Caco-2 (cell line): ENCODE measurements at regions of chr2 and their contacts with region 1.

Region 1: GRCh38 chr2:7363906-7364305 is 446.7 kb downstream of the RNF144A start:
- DNase-seq: peak in 1 of 2 experiments; percentile 19
- H3K4me3 ChIP-seq: no peak overlapping the region
- H3K4me3 Mint-ChIP-seq: no peak overlapping the region
- H3K27ac Mint-ChIP-seq: no peak overlapping the region
- H3K4me1 ChIP-seq: no peaks in the 10 kb centered on the region
- H3K4me1 Mint-ChIP-seq: no peaks in the 10 kb centered on the region
- H3K27me3 ChIP-seq: no peaks in the 10 kb centered on the region
- H3K27me3 Mint-ChIP-seq: no peaks in the 10 kb centered on the region
- CTCF ChIP-seq: peak; percentile 48 to 52

Region 2: DNA sequence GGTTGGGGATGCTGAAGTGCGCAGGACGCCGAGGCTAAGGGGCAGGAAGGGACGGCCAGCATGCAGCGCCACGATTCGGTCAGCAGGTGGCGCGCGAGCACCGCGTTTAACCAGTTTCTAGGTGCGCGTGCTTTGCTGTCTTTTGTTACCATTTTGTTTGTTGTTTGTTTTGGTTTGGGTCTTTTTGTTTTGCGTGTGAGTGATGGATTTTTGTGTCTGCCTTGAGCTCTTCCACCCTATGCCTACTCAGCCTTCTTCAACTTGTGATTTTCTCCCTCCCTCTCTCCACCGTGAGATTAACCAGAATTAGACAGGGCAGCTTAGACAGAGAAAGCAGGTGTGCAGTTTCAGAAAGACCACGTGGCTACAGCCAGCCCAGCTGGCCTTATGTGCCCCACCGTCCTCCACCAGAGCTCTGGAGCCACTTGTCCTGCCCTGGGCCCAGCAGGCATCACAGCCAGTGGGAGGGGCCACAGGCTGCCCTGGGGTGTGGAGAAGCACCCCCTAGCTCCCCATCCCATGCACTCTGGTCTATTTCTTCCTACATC is 266.5 kb before region 1 on chr2:
- CTCF ChIA-PET with region 1: no interaction called
- POLR2A ChIA-PET with region 1: no interaction called
- intact Hi-C with region 1: loop called (anchors 1 kb)
- DNase-seq: peak in 1 of 2 experiments; percentile 77
- H3K4me3 ChIP-seq: no peak overlapping the region
- H3K4me3 Mint-ChIP-seq: peak overlapping the region; percentile 27
- H3K27ac Mint-ChIP-seq: no peak overlapping the region
- H3K4me1 ChIP-seq: no peaks in the 10 kb centered on the region
- H3K4me1 Mint-ChIP-seq: peaks cover under 1% of the 10 kb centered on the region
- H3K27me3 ChIP-seq: no peaks in the 10 kb centered on the region
- H3K27me3 Mint-ChIP-seq: peaks cover 12% of the 10 kb centered on the region
- CTCF ChIP-seq: peak; percentile 93 to 96

Region 3: GRCh38 chr2:7118606-7119503 is 245.1 kb before region 1 on chr2:
- CTCF ChIA-PET with region 1: no interaction called
- POLR2A ChIA-PET with region 1: no interaction called
- intact Hi-C with region 1: loop called (anchors 2 kb)
- DNase-seq: peak in 1 of 2 experiments; percentile 38
- H3K4me3 ChIP-seq: no peak overlapping the region
- H3K4me3 Mint-ChIP-seq: no peak overlapping the region
- H3K27ac Mint-ChIP-seq: no peak overlapping the region
- H3K4me1 ChIP-seq: no peaks in the 10 kb centered on the region
- H3K4me1 Mint-ChIP-seq: no peaks in the 10 kb centered on the region
- H3K27me3 ChIP-seq: peaks cover 2% of the 10 kb centered on the region; the same call in 1 of the 2 replicates
- H3K27me3 Mint-ChIP-seq: peaks cover 18% of the 10 kb centered on the region
- CTCF ChIP-seq: peak; percentile 46 to 55

Region 4: GRCh38 chr2:7392076-7392787 is 28.3 kb after region 1 on chr2:
- CTCF ChIA-PET with region 1: no interaction called
- POLR2A ChIA-PET with region 1: no interaction called
- intact Hi-C with region 1: no loop called
- DNase-seq: no peak
- H3K4me3 ChIP-seq: no peak overlapping the region
- H3K4me3 Mint-ChIP-seq: no peak overlapping the region
- H3K27ac Mint-ChIP-seq: no peak overlapping the region
- H3K4me1 ChIP-seq: no peaks in the 10 kb centered on the region
- H3K4me1 Mint-ChIP-seq: no peaks in the 10 kb centered on the region
- H3K27me3 ChIP-seq: no peaks in the 10 kb centered on the region
- H3K27me3 Mint-ChIP-seq: peaks cover 15% of the 10 kb centered on the region
- CTCF ChIP-seq: no peak

Region 5: DNA sequence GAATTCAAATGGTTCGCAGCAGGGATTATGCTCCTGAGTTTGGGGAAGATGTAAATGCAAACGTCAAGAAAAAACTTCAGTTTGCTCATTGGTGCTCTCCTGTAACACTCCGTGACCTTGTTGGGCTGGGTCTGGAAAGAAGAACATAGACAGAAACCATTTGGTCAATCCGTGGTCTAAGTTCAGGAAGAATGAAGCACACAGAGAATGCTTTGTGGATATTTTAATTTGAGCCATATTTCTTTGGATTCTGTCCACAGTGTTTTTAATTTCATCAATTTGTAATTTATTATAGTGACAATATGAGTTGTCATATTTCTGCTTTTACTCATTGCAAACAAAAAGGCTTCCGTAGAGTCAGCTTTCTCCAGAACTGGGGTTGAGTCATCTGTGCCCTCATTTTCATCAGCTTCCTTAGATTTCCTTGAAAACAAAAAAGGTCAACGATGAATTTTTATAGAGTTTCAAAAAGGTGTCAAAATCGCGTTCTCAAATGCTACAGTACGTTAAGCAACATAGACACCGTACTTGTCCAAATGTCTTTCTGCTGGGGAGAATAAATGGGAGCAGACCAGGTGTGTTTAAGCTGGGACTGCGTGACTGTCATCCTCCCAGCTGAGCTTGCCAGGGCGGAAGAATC is 159.7 kb after region 1 on chr2:
- CTCF ChIA-PET with region 1: no interaction called
- POLR2A ChIA-PET with region 1: no interaction called
- intact Hi-C with region 1: no loop called
- DNase-seq: no peak
- H3K4me3 ChIP-seq: no peak overlapping the region
- H3K4me3 Mint-ChIP-seq: no peak overlapping the region
- H3K27ac Mint-ChIP-seq: no peak overlapping the region
- H3K4me1 ChIP-seq: no peaks in the 10 kb centered on the region
- H3K4me1 Mint-ChIP-seq: no peaks in the 10 kb centered on the region
- H3K27me3 ChIP-seq: no peaks in the 10 kb centered on the region
- H3K27me3 Mint-ChIP-seq: peaks cover 17% of the 10 kb centered on the region
- CTCF ChIP-seq: no peak

Region 6: GRCh38 chr2:7625392-7626138 is 261.7 kb after region 1 on chr2:
- CTCF ChIA-PET with region 1: no interaction called
- POLR2A ChIA-PET with region 1: no interaction called
- intact Hi-C with region 1: no loop called
- DNase-seq: no peak
- H3K4me3 ChIP-seq: no peak overlapping the region
- H3K4me3 Mint-ChIP-seq: no peak overlapping the region
- H3K27ac Mint-ChIP-seq: no peak overlapping the region
- H3K4me1 ChIP-seq: no peaks in the 10 kb centered on the region
- H3K4me1 Mint-ChIP-seq: no peaks in the 10 kb centered on the region
- H3K27me3 ChIP-seq: no peaks in the 10 kb centered on the region
- H3K27me3 Mint-ChIP-seq: no peaks in the 10 kb centered on the region
- CTCF ChIP-seq: no peak